H1 (cell line): ENCODE measurements at regions of chr7 and their contacts with region 1.

Region 1: GRCh38 chr7:149790146-149790548 is 16.8 kb upstream of the ZNF467 start:
- DNase-seq: peak in 1 of 2 experiments; percentile 90
- H3K4me3 ChIP-seq: peak overlapping the region; percentile 14 to 55 (median 23)
- H3K27ac ChIP-seq: no peak overlapping the region
- H3K4me1 ChIP-seq: peaks cover 0 to 4% (median 2%) of the 10 kb centered on the region in 4 experiments; a peak in 5 of 7 replicates
- H3K27me3 ChIP-seq: peaks cover 8 to 44% (median 35%) of the 10 kb centered on the region in 4 experiments
- CTCF ChIP-seq: peak in 2 of 3 experiments; percentile 82 to 86; a peak in 3 of 4 replicates
- EP300 ChIP-seq: no peak
- POLR2A ChIP-seq: no peak
- RAD21 ChIP-seq: peak; percentile 34 to 52; a peak in 3 of 4 replicates

Region 2: GRCh38 chr7:149670288-149670687 is 119.9 kb before region 1 on chr7:
- CTCF ChIA-PET with region 1: no interaction called
- POLR2A ChIA-PET with region 1: no interaction called
- DNase-seq: no peak
- H3K4me3 ChIP-seq: no peak overlapping the region
- H3K27ac ChIP-seq: no peak overlapping the region
- H3K4me1 ChIP-seq: no peaks in the 10 kb centered on the region
- H3K27me3 ChIP-seq: no peaks in the 10 kb centered on the region
- CTCF ChIP-seq: no peak
- EP300 ChIP-seq: no peak
- POLR2A ChIP-seq: no peak
- RAD21 ChIP-seq: no peak

Region 3: GRCh38 chr7:149722356-149722957 is 67.7 kb before region 1 on chr7:
- CTCF ChIA-PET with region 1: no interaction called
- POLR2A ChIA-PET with region 1: no interaction called
- DNase-seq: no peak
- H3K4me3 ChIP-seq: no peak overlapping the region
- H3K27ac ChIP-seq: no peak overlapping the region
- H3K4me1 ChIP-seq: no peaks in the 10 kb centered on the region
- H3K27me3 ChIP-seq: no peaks in the 10 kb centered on the region
- CTCF ChIP-seq: no peak
- EP300 ChIP-seq: no peak
- POLR2A ChIP-seq: no peak
- RAD21 ChIP-seq: no peak

Region 4: GRCh38 chr7:149748076-149748874 is 41.9 kb before region 1 on chr7:
- CTCF ChIA-PET with region 1: interaction called, 13 read pairs
- POLR2A ChIA-PET with region 1: no interaction called
- DNase-seq: peak in 1 of 2 experiments; percentile 43
- H3K4me3 ChIP-seq: 0 out of 8 replicates have a peak overlapping the region, but pooled peaks of 1 of the 4 experiments have one; percentile 3
- H3K27ac ChIP-seq: no peak overlapping the region
- H3K4me1 ChIP-seq: peaks cover 0 to 7% (median 0%) of the 10 kb centered on the region in 4 experiments; a peak in 1 of 7 replicates
- H3K27me3 ChIP-seq: no peaks in the 10 kb centered on the region
- CTCF ChIP-seq: no peak
- EP300 ChIP-seq: no peak
- POLR2A ChIP-seq: no peak
- RAD21 ChIP-seq: no peak

Region 5: DNA sequence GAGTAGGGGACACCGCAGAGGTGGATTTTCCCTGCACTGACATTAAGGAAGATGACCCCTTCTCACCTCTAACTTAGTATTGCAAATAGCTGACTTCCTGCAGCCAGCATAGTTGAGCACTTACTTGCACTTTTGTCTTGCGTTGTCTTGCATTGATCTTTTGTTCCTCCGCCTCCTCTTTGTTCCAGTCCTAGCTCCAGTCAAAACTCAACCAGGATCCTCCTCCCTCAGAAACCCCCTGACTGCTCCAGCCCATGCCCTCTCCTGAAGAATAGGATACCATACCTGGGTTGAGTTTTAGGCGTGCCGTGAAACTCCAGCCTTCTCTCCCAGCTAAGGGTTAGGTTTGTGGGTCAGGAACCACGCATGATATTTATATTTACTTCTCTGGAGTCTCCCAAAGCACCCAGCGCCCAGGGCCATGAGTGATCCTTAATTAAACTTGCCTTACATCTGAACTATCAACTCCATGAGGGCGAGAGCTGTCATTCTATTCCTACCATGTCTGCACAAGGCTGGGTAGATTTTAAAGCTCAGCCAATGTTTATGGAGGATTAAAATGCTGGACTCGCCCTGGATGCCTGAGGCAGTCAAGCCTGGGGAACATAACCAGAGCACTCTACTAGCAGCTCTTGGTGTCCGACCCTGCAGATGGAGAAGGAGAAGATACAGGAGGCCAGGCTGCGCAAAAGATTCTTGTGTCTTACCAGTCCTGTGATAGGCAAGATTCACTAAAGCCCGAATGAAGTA is 30.9 kb before region 1 on chr7:
- CTCF ChIA-PET with region 1: interaction called, 115 read pairs
- POLR2A ChIA-PET with region 1: no interaction called
- DNase-seq: no peak
- H3K4me3 ChIP-seq: no peak overlapping the region
- H3K27ac ChIP-seq: no peak overlapping the region
- H3K4me1 ChIP-seq: peaks cover 0 to 1% (median under 1%) of the 10 kb centered on the region in 4 experiments; a peak in 1 of 7 replicates
- H3K27me3 ChIP-seq: peaks cover 17 to 45% (median 36%) of the 10 kb centered on the region in 4 experiments
- CTCF ChIP-seq: no peak
- EP300 ChIP-seq: no peak
- POLR2A ChIP-seq: no peak
- RAD21 ChIP-seq: no peak

Region 6: DNA sequence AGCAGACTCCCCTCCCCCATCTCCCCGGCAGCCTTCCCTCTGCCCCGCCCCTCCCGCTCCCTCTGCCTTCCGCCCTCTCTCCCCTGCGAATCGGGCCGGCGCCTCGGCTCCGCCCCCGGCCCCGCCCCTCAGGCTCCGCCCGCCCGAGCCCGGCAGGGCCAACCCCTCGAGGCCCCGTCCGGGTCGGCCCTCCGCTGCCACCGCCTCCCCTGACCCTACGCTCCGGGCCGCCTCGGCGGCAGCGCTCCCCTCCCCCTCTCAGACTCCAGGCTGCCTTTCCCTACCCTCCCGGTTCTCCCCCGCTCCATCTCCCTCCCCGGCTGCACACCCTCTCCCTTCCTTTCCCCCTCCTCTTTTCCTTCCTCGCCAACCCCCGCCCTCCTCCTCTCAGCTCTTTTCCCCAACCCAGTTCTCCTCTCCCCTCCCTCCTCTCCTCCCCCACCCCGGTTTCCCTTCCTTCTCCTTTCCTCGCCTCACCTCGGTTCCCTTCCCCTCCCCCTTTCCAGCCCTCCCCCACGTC is 18.4 kb before region 1 on chr7:
- CTCF ChIA-PET with region 1: interaction called, 115 read pairs
- POLR2A ChIA-PET with region 1: interaction called, 6 read pairs
- DNase-seq: peak; percentile 71 to 92
- H3K4me3 ChIP-seq: peak overlapping the region; percentile 40 to 86 (median 44); a peak in 6 of 8 replicates
- H3K27ac ChIP-seq: no peak overlapping the region; the same call in 1 of the 2 replicates
- H3K4me1 ChIP-seq: peaks cover 0 to 9% (median 7%) of the 10 kb centered on the region in 4 experiments; a peak in 6 of 7 replicates
- H3K27me3 ChIP-seq: peaks cover 42 to 72% (median 68%) of the 10 kb centered on the region in 4 experiments
- CTCF ChIP-seq: no peak
- EP300 ChIP-seq: peak in 1 of 2 experiments; percentile 51; a peak in 1 of 3 replicates
- POLR2A ChIP-seq: no peak
- RAD21 ChIP-seq: no peak